ENCODE measurements at regions of chr13 and their contacts with region 1.

Region 1: DNA sequence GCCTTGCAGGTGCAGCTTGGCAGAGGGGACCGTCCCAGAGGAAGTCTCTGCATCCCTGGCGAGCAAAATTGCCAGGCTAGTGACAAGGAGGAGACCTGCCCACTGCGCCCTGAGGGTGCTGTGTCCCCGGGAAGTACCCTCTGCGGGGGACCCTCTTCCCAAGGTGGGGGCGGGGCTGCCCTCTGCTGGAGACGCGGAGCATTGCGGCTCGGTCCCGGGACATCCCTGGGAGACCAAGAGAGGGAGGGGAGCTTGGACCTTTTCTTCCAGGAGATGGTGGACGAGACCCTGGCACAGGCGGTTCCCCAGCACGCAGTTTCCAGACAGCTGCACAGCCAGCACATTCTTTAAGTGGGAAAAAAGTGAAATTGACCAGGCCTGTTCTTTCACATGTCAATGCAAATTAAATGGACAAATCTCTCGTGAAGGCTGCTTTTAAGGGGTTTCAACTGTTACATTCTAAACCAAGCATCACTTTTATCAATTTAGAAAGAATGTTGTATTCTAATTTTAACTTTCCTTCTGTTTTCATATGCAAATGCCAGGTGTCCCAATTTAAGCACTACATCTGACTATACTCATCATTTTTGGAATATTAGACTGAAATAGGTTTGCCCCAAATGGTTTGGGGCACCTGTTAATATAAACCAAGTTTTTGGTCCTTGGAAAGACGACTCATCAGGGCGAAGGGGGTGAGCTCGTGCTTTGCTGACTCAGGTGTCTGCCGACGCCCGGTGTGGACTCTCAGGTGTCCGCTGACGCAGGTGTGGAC is 60.7 kb downstream of the MCF2L start:
- DNase-seq: peak; percentile 90
- ATAC-seq: peak; percentile 92
- H3K4me3 Mint-ChIP-seq: no peak overlapping the region
- H3K27ac Mint-ChIP-seq: no peak overlapping the region
- H3K4me1 Mint-ChIP-seq: no peaks in the 10 kb centered on the region
- H3K27me3 Mint-ChIP-seq: no peaks in the 10 kb centered on the region
- CTCF ChIP-seq: peak; percentile 89

Region 2: DNA sequence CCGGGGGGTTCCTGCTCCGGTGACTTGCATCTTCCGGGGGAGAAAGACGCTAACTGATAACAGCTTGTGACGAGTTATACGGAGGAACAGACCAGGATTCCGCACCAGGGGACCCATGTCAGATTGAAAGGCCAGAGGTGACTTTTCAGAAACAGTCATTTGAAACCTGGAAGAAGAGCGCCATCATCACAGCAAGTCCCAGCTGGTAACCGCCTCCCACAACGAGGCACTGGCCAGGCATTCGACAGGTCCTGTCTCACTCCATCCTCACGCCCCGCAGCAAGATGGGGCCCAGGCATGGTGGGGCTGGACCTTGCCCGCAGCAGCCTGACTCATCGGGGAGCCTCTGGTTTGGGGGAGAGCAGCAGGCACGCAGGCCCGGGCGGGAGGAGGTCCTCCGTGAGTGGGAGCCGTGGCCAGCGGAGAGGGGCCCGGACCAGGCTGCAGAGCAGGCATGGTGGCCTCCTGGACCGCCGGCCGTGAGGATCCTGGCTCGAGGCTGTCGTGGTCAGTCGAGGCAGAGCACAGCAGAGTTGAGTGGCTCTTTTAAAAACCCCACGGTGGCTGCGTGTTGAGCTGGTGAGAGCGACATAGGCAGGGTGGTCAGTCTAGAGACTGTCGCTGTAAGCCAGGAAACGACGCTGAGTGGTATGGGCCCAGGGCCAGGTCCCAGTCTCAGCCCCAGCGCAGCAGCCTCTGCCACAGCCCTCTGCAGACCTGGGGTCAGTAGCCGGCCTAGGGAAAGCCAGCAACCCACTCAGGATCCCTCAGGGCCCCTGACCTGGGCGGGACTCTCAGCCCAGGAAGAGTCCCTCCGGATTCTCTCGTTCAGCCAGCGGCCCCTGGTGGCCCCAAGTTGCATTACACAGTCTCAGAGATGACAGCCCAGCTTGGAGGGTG is 155.6 kb before region 1 on chr13:
- CTCF ChIA-PET with region 1: no interaction called
- POLR2A ChIA-PET with region 1: no interaction called
- DNase-seq: peak; percentile 87
- ATAC-seq: peak; percentile 94
- H3K4me3 Mint-ChIP-seq: no peak overlapping the region
- H3K27ac Mint-ChIP-seq: peak overlapping the region; percentile 85
- H3K4me1 Mint-ChIP-seq: peaks cover 5% of the 10 kb centered on the region; the same call in 1 of the 2 replicates
- H3K27me3 Mint-ChIP-seq: no peaks in the 10 kb centered on the region
- CTCF ChIP-seq: peak; percentile 97

Region 3: GRCh38 chr13:112956571-112957294 is 72.9 kb before region 1 on chr13:
- CTCF ChIA-PET with region 1: interaction called, 13 read pairs
- POLR2A ChIA-PET with region 1: interaction called, 3 read pairs
- DNase-seq: no peak
- ATAC-seq: peak; percentile 47
- H3K4me3 Mint-ChIP-seq: no peak overlapping the region
- H3K27ac Mint-ChIP-seq: peak overlapping the region; percentile 17; the same call in 1 of the 2 replicates
- H3K4me1 Mint-ChIP-seq: peaks cover 22% of the 10 kb centered on the region
- H3K27me3 Mint-ChIP-seq: no peaks in the 10 kb centered on the region
- CTCF ChIP-seq: no peak

Region 4: GRCh38 chr13:112983428-112984196 is 46.1 kb before region 1 on chr13:
- CTCF ChIA-PET with region 1: interaction called, 13 read pairs
- POLR2A ChIA-PET with region 1: no interaction called
- DNase-seq: no peak
- ATAC-seq: no peak; the same call in 1 of the 2 replicates
- H3K4me3 Mint-ChIP-seq: no peak overlapping the region
- H3K27ac Mint-ChIP-seq: 0 out of 2 replicates have a peak overlapping the region, but pooled peaks have one; percentile 60
- H3K4me1 Mint-ChIP-seq: peaks cover 4% of the 10 kb centered on the region
- H3K27me3 Mint-ChIP-seq: no peaks in the 10 kb centered on the region
- CTCF ChIP-seq: no peak

Region 5: DNA sequence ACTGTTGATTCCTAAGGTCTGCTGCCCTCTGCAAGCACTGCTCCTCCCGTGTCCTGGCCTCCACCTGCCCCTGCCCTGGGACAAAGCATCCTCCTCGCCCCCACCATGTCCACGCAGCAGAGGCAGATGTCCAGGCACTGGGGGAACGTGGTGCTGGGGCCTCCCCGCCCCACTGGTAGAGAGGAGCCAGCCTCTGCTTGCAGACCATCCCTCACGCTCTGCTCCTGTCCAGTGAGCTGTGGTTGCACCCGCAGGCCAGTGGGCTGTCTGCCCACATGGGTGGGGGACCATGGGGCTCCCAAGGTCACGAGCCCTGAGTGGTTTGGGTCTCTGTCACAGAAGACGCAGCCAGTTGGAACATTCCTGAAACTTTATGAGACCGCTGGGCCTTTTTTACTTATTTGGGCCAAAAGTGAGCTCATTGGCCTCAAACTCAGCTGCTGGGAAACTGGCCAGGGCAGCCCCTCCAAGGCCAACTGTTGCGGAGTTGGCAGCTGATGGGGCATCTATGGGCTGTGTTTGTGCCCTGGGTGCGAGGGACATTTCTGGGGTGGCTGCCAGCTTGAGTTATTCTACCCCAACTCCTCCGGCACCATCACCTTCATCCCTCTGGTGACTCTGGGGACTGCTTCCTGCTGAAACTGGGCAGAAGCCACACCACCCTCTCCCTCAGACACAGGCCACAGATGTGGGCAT is 11.1 kb after region 1 on chr13:
- CTCF ChIA-PET with region 1: interaction called, 11 read pairs
- POLR2A ChIA-PET with region 1: no interaction called
- DNase-seq: no peak
- ATAC-seq: no peak
- H3K4me3 Mint-ChIP-seq: no peak overlapping the region
- H3K27ac Mint-ChIP-seq: no peak overlapping the region
- H3K4me1 Mint-ChIP-seq: no peaks in the 10 kb centered on the region
- H3K27me3 Mint-ChIP-seq: no peaks in the 10 kb centered on the region
- CTCF ChIP-seq: no peak

Region 6: DNA sequence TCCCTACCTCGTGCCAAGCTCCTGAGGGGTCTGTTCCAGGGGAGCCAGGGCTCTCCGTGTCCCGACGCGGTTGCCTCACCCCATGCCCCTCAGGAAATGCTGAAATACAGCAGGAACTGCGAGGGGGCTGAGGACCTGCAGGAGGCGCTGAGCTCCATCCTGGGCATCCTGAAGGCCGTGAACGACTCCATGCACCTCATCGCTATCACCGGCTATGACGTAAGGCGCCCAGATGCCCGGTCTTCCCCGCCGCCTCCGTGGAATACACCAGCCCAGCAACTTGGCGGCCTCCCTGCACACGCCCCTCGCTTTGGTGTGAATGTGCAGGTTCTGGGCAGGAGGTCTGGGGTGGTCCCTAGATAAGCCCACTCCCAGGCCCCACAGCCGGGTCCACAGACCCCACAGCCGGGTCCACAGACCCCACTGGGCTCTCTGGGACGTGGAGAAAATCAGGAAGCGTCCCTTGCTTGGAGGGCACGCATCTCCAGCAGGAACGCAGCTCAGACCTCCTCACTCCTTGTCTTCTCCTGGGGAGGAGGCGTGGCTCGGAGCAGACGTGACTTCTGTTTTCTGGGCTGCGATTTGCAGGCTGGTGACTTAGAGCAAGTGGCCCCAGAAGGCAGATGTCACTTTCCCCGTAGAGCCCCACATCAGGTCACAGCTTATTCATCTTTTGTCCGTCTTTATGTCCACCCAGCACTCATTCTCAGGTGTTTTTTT is 56.5 kb after region 1 on chr13:
- CTCF ChIA-PET with region 1: interaction called, 16 read pairs
- POLR2A ChIA-PET with region 1: no interaction called
- DNase-seq: peak; percentile 68
- ATAC-seq: peak; percentile 43
- H3K4me3 Mint-ChIP-seq: no peak overlapping the region
- H3K27ac Mint-ChIP-seq: no peak overlapping the region
- H3K4me1 Mint-ChIP-seq: peaks cover 14% of the 10 kb centered on the region
- H3K27me3 Mint-ChIP-seq: no peaks in the 10 kb centered on the region
- CTCF ChIP-seq: no peak